HepG2 (cell line): ENCODE measurements at regions of chr7 and their contacts with region 1.

Region 1: GRCh38 chr7:129664029-129665012 is 52.8 kb downstream of the NRF1 start:
- DNase-seq: peak; percentile 42
- ATAC-seq: no peak; the same call in 2 of the 3 replicates
- H3K4me3 ChIP-seq: no peak overlapping the region
- H3K27ac ChIP-seq: no peak overlapping the region
- H3K4me1 ChIP-seq: no peaks in the 10 kb centered on the region
- H3K27me3 ChIP-seq: no peaks in the 10 kb centered on the region
- CTCF ChIP-seq: peak; percentile 65
- EP300 ChIP-seq: no peak
- POLR2A ChIP-seq: no peak
- RAD21 ChIP-seq: peak; percentile 58; the same call in 1 of the 2 replicates

Region 2: GRCh38 chr7:130010689-130011412 is 346.5 kb after region 1 on chr7:
- CTCF ChIA-PET with region 1: interaction called, 5 read pairs
- POLR2A ChIA-PET with region 1: no interaction called
- in situ Hi-C with region 1: loop called (anchors 10 kb)
- intact Hi-C with region 1: loop called (anchors 1 kb)
- DNase-seq: peak; percentile 78
- ATAC-seq: peak; percentile 48
- H3K4me3 ChIP-seq: peak overlapping the region in 2 of 3 experiments; percentile 29 to 51; a peak in 3 of 6 replicates
- H3K27ac ChIP-seq: no peak overlapping the region
- H3K4me1 ChIP-seq: peaks cover 40% of the 10 kb centered on the region
- H3K27me3 ChIP-seq: peaks cover 0 to 6% of the 10 kb centered on the region in 2 experiments; a peak in 1 of 5 replicates
- CTCF ChIP-seq: peak; percentile 87
- EP300 ChIP-seq: no peak
- POLR2A ChIP-seq: no peak
- RAD21 ChIP-seq: peak; percentile 77